ENCODE measurements at regions of chr12 and their contacts with region 1.

Region 1: DNA sequence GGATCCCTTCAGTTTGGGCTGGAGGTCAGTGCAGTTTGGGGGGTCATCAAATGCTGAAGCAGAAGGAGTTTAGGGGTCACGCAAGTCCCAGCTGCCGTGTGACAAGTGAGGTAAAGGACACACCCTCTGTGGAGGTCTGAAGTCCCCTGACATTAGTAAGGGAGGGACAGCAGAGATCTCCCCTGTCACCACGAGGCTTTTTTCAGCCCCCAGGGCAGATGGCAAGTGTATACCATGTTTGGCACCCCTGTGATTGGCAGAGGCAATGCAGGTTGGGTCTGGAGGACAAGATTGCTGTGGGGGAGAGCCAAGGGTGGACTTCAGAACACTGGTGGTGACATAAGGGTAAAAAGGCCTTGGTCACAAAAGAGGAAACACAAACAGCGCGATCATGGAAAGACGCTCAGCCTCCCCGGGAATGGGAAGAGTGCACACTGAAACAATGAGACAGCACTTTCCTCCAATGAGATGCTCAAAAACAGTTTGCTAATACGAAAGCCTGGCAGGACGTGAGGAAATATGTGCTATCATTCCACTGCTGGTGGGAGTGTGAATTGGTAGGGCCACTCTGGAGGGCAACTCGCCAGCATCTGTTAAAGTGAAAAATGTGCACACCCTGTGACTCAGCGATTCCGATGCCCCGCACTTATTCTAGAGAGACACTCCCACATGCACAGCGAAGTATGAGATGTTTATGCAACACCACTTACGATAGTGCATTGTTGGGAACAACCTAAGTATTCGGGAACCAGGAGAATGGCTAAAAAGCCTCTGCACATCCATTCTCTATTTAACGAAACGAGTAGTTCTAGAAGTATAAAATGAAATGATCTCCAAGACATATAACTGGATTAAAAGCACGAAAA is 14.4 kb upstream of the CD27 start:
- DNase-seq: peak; percentile 97 to 98
- H3K4me3 ChIP-seq: peak overlapping the region; percentile 37
- H3K27ac ChIP-seq: peak overlapping the region; percentile 98
- H3K4me1 ChIP-seq: peaks cover 29% of the 10 kb centered on the region
- H3K27me3 ChIP-seq: no peaks in the 10 kb centered on the region
- CTCF ChIP-seq: no peak

Region 2: GRCh38 chr12:6416596-6416995 is 13.8 kb before region 1 on chr12:
- CTCF ChIA-PET with region 1: no interaction called
- POLR2A ChIA-PET with region 1: interaction called, 48 read pairs
- intact Hi-C with region 1: no loop called
- DNase-seq: no peak
- H3K4me3 ChIP-seq: no peak overlapping the region
- H3K27ac ChIP-seq: no peak overlapping the region
- H3K4me1 ChIP-seq: no peaks in the 10 kb centered on the region
- H3K27me3 ChIP-seq: no peaks in the 10 kb centered on the region
- CTCF ChIP-seq: no peak

Region 3: GRCh38 chr12:6444704-6445688 is 14.6 kb after region 1 on chr12 and contains the start of gene CD27:
- CTCF ChIA-PET with region 1: interaction called, 23 read pairs
- POLR2A ChIA-PET with region 1: no interaction called
- intact Hi-C with region 1: no loop called
- DNase-seq: no peak
- H3K4me3 ChIP-seq: no peak within 1 kb of the TSS
- H3K27ac ChIP-seq: no peak within 1 kb of the TSS
- H3K4me1 ChIP-seq: no peaks in the 10 kb centered on the region
- H3K27me3 ChIP-seq: no peaks in the 10 kb centered on the region
- CTCF ChIP-seq: no peak
- total RNA-seq, gene CD27: not detected in 2 replicates

Region 4: GRCh38 chr12:6451348-6452244 is 21.2 kb after region 1 on chr12 and contains the start of gene TAPBPL:
- CTCF ChIA-PET with region 1: no interaction called
- POLR2A ChIA-PET with region 1: no interaction called
- intact Hi-C with region 1: loop called (anchors 1 kb)
- DNase-seq: peak; percentile 70 to 85
- H3K4me3 ChIP-seq: peak within 1 kb of the TSS; percentile 63
- H3K27ac ChIP-seq: peak within 1 kb of the TSS; percentile 52
- H3K4me1 ChIP-seq: peaks cover 13% of the 10 kb centered on the region
- H3K27me3 ChIP-seq: no peaks in the 10 kb centered on the region
- CTCF ChIP-seq: no peak
- total RNA-seq, gene TAPBPL: 26.0 and 27.8 TPM in 2 replicates

Region 5: DNA sequence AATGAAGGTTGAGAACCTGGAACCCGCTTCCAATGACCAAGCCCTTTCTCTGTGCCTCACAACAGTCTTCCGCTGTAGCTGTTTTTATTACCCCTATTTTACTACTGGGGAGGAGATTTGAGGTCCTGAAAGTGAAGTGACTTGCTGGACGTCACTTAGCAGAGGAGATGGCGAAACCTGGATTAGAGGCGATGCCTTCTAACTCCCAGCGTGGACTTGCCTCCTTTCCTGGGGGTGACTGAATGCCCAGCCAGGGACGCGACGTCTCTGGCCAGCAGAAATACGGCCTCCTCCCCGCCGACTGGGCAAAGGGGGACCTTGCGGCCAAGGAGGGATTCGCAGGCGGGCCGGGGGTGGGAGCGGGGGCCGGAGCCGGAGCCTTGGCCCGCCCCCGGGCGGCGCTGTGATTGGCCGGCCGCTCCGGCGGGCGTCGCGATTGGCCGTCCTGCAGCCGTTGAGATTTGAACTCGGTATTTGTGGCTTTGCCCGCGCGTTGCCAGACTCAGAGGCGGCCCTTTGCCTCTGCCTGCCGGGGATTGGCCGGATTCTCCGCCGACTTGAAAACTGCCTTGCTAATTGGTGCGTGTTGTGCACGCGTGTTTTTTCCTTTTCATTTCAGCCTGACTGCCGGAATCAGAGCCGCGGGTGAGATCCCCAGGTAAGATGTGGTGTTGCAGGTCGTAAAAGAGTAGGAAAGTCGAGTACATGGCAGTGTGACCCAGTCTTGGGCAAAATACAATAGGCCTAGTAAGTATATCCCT is 63.3 kb after region 1 on chr12 and contains the start of gene NCAPD2:
- CTCF ChIA-PET with region 1: no interaction called
- POLR2A ChIA-PET with region 1: no interaction called
- intact Hi-C with region 1: loop called (anchors 2 kb)
- DNase-seq: peak; percentile 93 to 98
- H3K4me3 ChIP-seq: peak within 1 kb of the TSS; percentile 87
- H3K27ac ChIP-seq: peak within 1 kb of the TSS; percentile 85
- H3K4me1 ChIP-seq: peaks cover 24% of the 10 kb centered on the region
- H3K27me3 ChIP-seq: no peaks in the 10 kb centered on the region
- CTCF ChIP-seq: peak; percentile 46; the same call in 1 of the 2 replicates
- total RNA-seq, gene NCAPD2: 220 and 266 TPM in 2 replicates